ENCODE measurements at regions of chr11 and their contacts with region 1.

Region 1: DNA sequence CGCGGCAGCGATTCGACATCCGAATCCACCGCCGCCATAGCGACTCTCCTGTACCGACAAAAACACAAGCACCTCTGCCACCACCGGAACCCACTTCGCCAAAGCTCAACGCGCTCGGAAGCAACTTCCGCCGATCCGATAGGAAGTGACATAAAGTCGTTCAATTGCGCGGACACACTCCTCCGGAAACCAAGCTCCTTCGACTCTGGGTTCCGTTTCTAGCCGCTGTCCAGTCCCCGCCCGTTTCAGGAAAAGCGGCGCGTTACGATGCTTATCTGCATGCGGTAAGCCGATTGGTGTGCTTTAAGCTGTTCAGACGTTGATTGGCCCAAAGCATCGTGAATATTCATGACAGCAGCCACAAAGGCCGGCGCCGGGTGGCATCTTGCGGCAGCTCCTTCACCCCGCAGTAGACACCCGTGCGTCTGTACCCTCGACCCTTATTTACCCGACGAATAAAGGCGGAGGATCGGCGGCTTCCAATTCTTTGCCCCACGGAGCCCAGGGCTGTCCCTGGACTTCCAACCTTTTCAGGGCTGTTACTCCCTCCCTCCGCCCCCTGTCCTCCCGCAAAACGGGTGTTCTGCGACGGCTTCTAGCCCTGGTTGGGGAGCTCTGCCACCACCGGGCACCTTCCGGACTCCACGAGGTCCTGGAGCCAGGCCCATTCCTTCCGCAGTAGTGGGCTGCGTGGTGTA is at the start of gene TUT1:
- DNase-seq: peak; percentile 83
- ATAC-seq: peak; percentile 85
- H3K4me3 Mint-ChIP-seq: peak within 1 kb of the TSS; percentile 97
- H3K27ac Mint-ChIP-seq: peak within 1 kb of the TSS; percentile 98
- H3K4me1 Mint-ChIP-seq: peaks cover 52% of the 10 kb centered on the region
- H3K27me3 Mint-ChIP-seq: no peaks in the 10 kb centered on the region
- CTCF ChIP-seq: no peak
- total RNA-seq, gene TUT1: 27.8 and 30.9 TPM in 2 replicates

Region 2: DNA sequence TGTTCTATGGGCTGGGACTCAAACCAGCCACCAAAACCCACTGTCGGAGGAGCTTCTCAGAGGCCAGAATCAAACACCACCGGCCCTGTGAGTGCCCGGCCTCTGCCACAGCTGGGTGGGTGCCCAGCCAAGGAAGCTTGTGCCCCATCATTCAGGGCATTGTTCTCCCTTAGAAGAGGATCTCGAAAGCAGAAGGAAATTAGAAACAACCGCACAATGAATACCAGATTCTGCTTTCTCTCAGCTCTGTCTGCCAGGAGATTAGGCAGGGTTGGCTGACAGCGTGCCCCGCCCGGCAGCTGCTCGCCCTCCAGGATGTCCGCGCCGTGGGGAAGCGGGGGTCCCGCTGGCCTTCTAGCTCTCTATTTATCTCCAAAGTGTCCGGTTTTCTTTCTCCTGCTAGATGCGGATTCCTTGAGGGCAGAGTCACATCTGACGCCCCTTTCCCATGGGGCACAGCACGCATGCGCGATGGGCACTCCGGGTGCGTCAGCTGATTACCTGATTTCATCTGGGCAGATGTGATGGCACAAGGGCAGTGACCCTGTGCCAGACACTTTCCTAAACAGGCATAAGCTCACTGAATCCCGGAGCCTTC is 147.3 kb before region 1 on chr11:
- CTCF ChIA-PET with region 1: interaction called, 3 read pairs
- POLR2A ChIA-PET with region 1: interaction called, 14 read pairs
- intact Hi-C with region 1: no loop called
- DNase-seq: peak; percentile 58
- ATAC-seq: peak; percentile 86
- H3K4me3 Mint-ChIP-seq: peak overlapping the region; percentile 83
- H3K27ac Mint-ChIP-seq: peak overlapping the region; percentile 95
- H3K4me1 Mint-ChIP-seq: peaks cover 29% of the 10 kb centered on the region
- H3K27me3 Mint-ChIP-seq: no peaks in the 10 kb centered on the region
- CTCF ChIP-seq: no peak

Region 3: DNA sequence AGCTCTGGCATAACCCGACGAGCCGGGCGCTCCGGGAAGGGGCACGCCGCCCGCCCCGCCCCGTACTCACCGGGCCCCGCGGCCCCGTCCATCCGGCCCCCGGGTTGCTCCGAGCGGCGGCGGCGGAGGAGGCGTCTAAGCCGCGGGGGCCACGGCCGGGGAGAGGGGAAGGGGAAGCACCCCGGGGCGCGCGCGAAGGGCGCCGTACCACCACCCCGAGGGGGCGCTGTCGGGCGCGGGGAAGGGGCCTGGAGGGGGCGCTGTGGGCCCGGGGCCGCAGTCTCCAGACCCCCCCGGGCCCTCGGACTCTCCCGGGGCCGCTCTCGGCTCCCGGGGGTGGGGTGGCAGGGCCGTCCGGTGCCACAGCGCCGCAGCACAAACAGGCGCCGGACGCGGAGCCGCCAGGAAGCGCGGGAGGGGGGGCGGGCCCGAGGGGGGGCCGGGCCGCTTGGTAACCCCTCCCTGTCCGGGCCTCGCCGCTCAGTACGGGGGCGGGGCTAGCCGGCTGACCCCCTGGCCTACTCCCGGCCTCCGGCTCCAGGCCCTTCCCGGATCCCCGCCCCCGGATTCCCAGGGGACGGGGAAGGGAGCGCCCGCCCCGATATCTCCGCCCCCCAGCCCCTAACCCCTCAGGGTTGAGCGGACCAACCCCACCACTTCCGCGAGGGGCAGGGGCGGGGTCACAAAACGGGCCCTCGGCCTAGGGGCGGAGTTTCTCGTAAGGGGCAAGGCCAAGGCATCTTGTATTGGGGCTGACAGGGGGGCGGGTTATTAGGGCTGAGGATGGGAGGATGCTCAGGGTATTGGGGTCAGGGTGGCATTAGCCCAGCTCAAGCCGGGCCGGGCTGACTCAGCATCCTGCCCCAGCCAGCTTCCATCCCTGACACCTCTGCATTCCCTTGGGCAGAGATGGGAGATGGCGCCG is 21.0 kb after region 1 on chr11 and contains the starts of genes EML3 and ROM1:
- CTCF ChIA-PET with region 1: interaction called, 20 read pairs
- POLR2A ChIA-PET with region 1: interaction called, 63 read pairs
- intact Hi-C with region 1: loop called (anchors 1 kb)
- DNase-seq: peak; percentile 95
- ATAC-seq: peak; percentile 82
- H3K4me3 Mint-ChIP-seq: peak within 1 kb of the TSS; percentile 93
- H3K27ac Mint-ChIP-seq: peak within 1 kb of the TSS; percentile 95
- H3K4me1 Mint-ChIP-seq: peaks cover 27% of the 10 kb centered on the region
- H3K27me3 Mint-ChIP-seq: no peaks in the 10 kb centered on the region
- CTCF ChIP-seq: peak; percentile 59
- total RNA-seq, gene EML3: 115 and 128 TPM in 2 replicates
- total RNA-seq, gene ROM1: 0.89 and 2.6 TPM in 2 replicates

Region 4: GRCh38 chr11:62665075-62665598 is 73.5 kb after region 1 on chr11 and contains the starts of genes C11orf98 and CSKMT:
- CTCF ChIA-PET with region 1: interaction called, 12 read pairs
- POLR2A ChIA-PET with region 1: interaction called, 117 read pairs
- intact Hi-C with region 1: loop called (anchors 1 kb)
- DNase-seq: peak; percentile 95
- ATAC-seq: peak; percentile 89
- H3K4me3 Mint-ChIP-seq: peak within 1 kb of the TSS; percentile 97
- H3K27ac Mint-ChIP-seq: peak within 1 kb of the TSS; percentile 88
- H3K4me1 Mint-ChIP-seq: peaks cover 45% of the 10 kb centered on the region
- H3K27me3 Mint-ChIP-seq: no peaks in the 10 kb centered on the region
- CTCF ChIP-seq: no peak
- total RNA-seq, gene C11orf98: 107 and 120 TPM in 2 replicates
- total RNA-seq, gene CSKMT: 50.5 and 52.1 TPM in 2 replicates

Region 5: GRCh38 chr11:62705880-62706849 is 114.6 kb after region 1 on chr11:
- CTCF ChIA-PET with region 1: interaction called, 3 read pairs
- POLR2A ChIA-PET with region 1: interaction called, 63 read pairs
- intact Hi-C with region 1: loop called (anchors 1 kb)
- DNase-seq: peak; percentile 90
- ATAC-seq: peak; percentile 73
- H3K4me3 Mint-ChIP-seq: peak overlapping the region; percentile 92
- H3K27ac Mint-ChIP-seq: peak overlapping the region; percentile 99
- H3K4me1 Mint-ChIP-seq: peaks cover 49% of the 10 kb centered on the region
- H3K27me3 Mint-ChIP-seq: no peaks in the 10 kb centered on the region
- CTCF ChIP-seq: no peak

Region 6: DNA sequence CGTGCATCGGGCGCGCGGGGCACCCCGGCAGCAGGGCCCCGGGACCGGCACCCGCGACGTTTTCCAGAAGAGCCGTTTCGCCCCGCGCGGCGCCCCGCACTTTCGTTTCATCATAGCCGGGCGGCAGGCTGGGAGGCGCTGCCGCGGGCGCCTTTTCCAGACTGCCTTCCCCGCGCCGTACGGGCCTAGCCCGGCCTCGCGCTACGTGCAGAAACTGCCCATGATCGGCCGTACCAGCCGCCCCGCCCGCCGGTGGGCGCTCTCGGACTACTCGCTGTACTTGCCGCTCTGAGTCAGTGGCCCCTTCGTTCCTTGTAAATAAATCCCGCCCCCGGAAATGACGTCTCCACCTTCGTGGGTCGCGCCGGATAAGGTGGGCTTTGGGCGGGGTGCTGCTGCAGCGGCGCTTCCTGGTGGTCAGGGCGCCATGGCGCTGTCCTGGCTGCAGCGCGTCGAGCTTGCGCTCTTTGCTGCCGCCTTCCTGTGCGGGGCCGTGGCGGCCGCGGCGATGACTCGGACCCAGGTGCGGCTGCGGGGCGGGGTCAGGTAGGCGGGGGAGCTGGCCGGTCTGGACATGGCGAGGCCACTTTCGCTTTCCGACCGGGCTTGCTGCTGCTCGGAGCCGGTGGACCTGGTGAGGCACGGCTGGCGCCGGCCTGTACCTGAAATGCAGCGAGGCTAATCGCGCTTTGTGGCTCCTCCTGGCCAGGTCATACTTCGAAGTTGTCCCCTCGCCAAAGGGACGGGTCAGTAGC is 195.6 kb after region 1 on chr11 and contains the start of gene TMEM179B:
- CTCF ChIA-PET with region 1: interaction called, 4 read pairs
- POLR2A ChIA-PET with region 1: interaction called, 16 read pairs
- intact Hi-C with region 1: no loop called
- DNase-seq: peak; percentile 87
- ATAC-seq: peak; percentile 71
- H3K4me3 Mint-ChIP-seq: peak within 1 kb of the TSS; percentile 92
- H3K27ac Mint-ChIP-seq: peak within 1 kb of the TSS; percentile 89
- H3K4me1 Mint-ChIP-seq: peaks cover 42% of the 10 kb centered on the region
- H3K27me3 Mint-ChIP-seq: no peaks in the 10 kb centered on the region
- CTCF ChIP-seq: peak; percentile 66
- total RNA-seq, gene TMEM179B: 34.9 and 47.7 TPM in 2 replicates

Region 7: DNA sequence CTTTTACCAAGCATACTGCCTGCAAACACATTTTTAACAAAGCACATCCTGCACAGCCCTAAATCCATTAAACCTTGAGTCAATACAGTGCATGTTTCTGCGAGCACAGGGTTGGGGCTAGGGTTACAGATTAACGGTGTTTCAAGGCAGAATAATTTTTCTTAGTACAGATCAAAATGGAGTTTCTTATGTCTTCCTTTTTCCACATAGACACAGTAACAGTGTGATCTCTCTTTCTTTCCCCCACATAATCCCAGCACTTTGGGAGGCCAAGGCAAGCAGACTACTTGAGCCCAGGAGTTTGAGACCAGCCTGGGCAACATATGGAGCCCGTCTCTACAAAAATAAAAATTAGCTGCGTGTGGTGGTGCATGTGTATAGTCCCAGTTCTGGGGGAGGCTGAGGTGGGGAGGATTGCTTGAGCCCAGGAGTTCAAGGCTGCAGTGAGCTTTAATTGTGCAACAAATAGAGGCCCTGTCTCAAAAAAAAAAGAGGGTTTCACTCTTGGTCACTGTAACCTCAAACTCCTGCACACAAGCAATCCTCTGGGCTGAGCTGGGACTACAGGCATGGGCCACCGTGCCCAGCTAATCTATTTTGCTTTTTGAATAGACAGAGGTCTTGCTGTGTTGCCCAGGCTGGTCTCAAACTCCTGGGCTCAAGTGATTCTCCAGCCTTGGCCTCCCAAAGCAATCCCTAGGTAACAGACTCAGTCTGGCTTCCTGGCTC is 269.4 kb after region 1 on chr11:
- CTCF ChIA-PET with region 1: interaction called, 3 read pairs
- POLR2A ChIA-PET with region 1: interaction called, 39 read pairs
- intact Hi-C with region 1: loop called (anchors 5 kb)
- DNase-seq: no peak
- ATAC-seq: no peak
- H3K4me3 Mint-ChIP-seq: no peak overlapping the region
- H3K27ac Mint-ChIP-seq: no peak overlapping the region
- H3K4me1 Mint-ChIP-seq: peaks cover 24% of the 10 kb centered on the region
- H3K27me3 Mint-ChIP-seq: no peaks in the 10 kb centered on the region
- CTCF ChIP-seq: no peak